OCI-LY7 (cell line): ENCODE measurements at regions of chrX and their contacts with region 1.

Region 1: DNA sequence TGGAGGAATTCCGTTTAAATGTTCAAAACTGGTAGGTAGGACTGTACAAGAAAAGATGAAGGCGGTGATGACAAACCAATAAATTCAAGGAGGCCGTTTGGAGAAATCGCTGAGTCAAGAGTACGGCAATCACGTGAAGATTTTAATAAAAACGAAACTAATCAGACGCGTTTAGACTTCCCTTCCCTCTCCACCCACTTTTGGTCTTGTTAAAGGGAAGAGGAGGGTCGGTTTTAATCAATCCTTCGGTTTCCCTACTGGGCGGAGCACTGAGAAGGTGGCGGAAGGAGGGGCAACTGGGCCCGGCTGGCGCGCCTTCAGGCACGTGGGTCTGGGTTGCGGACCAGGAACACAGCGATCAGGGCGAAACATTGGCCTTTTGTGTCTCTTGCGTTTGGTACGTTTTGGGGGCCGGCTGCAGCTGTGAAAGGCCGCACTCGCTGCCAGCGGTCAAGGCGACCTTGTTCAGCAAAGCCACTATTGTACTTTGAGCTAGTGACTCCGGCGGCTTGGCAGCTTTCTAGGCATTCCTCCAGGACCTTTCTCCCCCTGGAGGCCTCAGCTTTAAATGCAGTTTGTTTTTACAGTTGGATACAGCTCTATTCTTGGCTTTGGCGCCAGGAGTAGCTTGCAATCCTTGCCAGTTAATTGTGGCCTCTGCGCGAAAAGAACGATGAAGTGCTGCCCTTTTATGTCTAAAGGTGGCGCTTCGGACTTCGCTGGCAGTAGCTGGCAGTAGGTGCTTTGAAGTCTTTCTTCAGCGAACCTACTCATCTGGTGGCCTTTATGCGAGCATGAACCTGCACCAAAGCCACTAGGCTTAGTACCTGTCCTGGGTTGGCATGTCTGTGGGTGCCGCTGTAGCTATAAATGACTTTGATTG is 16.8 kb upstream of the LAMP2 start:
- DNase-seq: peak; percentile 52
- H3K4me3 ChIP-seq: no peak overlapping the region
- H3K27ac ChIP-seq: no peak overlapping the region
- H3K4me1 ChIP-seq: peaks cover 7% of the 10 kb centered on the region
- CTCF ChIP-seq: peak; percentile 69

Region 2: DNA sequence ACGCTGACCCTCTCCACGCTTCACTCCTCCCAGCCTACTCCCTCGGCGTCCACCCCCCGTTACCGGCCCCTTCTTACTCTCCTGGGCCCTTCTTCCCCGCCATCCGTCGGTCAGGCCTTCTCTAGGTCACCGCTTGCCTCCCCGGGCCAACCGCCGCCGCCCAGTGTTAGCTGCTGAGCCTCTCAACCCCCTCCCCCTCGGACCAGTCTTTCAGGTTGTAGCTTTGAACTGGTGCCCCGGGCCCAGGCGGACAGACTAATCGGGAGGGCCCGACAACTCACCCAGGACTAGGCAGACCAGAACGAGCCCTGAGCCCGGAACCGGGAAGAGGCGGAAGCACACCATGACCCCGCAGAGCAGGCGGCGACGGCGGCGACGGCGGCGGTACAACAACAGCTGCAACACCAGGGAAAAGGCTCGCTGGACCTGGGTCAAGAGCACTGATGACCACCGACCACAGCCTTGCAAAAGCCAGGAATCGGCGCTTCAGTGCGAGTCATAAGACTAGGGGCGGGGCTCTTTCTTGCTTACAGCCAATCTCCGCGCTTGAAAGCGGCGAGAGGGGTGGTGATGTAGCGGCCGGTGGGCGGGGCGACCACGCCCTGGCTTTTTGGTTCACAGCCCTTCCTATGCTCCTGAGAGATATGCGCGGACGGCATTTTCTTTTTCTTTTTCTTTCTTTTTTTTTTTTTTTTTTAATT is 16.9 kb before region 1 on chrX and contains the start of gene LAMP2:
- CTCF ChIA-PET with region 1: interaction called, 4 read pairs
- POLR2A ChIA-PET with region 1: interaction called, 5 read pairs
- intact Hi-C with region 1: loop called (anchors 1 kb)
- DNase-seq: peak; percentile 90
- H3K4me3 ChIP-seq: peak within 1 kb of the TSS; percentile 75
- H3K27ac ChIP-seq: peak within 1 kb of the TSS; percentile 53
- H3K4me1 ChIP-seq: peaks cover 9% of the 10 kb centered on the region
- CTCF ChIP-seq: no peak
- total RNA-seq, gene LAMP2: 12.2 and 17.9 TPM in 2 replicates